ENCODE measurements at regions of chr3 and their contacts with region 1.

Region 1: DNA sequence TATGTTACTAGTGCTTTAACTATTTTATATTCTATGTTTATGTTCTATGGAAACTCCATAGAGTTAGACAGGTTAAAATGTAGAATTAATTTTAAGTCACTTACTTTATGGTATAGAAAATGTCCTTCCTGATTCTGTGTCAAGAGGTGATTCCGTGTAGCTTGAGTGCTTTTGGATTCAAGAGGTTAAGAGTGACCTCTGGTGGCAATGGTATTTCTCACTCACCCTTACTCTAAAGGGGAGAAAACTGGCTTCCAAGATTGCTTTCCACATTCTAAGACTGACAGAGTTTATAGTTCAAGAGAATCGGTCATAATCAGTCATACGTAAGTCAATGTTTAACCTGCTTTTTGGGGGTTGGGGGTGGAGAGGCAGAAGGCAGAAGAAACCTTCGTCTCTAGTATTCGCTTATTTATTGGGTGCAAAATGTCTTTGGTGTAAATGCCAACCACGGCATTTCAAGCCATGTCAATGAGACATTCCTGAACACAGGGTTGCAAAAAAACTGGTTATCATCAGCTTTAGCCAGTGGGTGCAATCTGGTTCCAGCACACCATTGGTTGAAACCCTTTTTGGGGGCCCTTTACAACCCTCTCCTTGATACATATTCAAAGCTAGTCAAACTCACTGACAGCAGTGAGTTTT is 92.0 kb upstream of the VGLL3 start:
- DNase-seq: no peak
- ATAC-seq: peak; percentile 46

Region 2: GRCh38 chr3:86785386-86785785 is 297.5 kb before region 1 on chr3:
- intact Hi-C with region 1: loop called (anchors 10 kb)
- DNase-seq: no peak
- ATAC-seq: no peak

Region 3: DNA sequence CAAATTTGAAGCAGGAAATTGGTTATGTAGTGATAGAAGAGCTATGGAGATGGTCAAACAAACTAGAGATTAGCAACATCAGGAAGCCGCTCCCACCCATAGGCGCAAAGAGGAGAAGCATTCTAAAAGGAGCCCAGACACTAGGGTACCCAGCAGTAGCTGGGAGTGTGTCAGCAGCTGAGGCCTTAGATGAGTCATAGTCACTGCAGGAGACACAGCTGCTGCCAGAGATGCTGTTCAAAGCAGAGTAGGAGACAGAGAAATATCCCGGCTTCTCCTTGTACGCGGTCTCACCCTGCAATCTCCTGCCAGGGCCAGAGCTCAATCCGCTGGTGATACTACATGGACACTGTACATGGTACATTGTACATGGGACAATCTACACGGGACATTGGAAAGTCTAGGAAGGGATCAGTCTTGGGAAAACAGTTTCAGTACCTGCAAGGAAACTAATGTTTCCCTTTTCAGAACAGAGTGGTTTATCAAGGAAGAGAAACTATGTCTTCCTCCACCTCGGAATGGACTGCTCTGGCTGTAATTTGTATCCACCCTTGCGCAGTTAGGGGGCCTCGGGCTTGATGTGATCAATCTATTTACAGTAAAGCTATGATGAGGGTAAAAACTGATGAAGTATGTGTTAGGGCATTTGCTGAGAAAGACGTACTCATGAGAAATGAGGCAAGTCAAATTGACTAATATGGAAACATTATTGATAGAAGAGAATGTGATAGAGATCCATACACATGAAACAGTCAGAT is 153.7 kb before region 1 on chr3:
- intact Hi-C with region 1: no loop called
- DNase-seq: no peak
- ATAC-seq: no peak

Measured in left ventricle myocardium superior (tissue), 1 donor.